ENCODE measurements at regions of chr14 and their contacts with region 1.

Region 1: GRCh38 chr14:70897464-70897863 is 9.8 kb upstream of the PCNX1 start:
- DNase-seq: no peak
- ATAC-seq: peak in 3 of 8 donors; percentile 10 to 39 (median 35)
- H3K4me3 ChIP-seq: no peak overlapping the region
- H3K27ac ChIP-seq: no peak overlapping the region
- H3K4me1 ChIP-seq: peaks cover 0 to 27% (median 5%) of the 10 kb centered on the region in 9 donors
- H3K27me3 ChIP-seq: no peaks in the 10 kb centered on the region
- CTCF ChIP-seq: no peak

Region 2: GRCh38 chr14:70527501-70528105 is 369.9 kb before region 1 on chr14:
- intact Hi-C with region 1: no loop called
- DNase-seq: no peak
- ATAC-seq: no peak
- H3K4me3 ChIP-seq: no peak overlapping the region
- H3K27ac ChIP-seq: no peak overlapping the region
- H3K4me1 ChIP-seq: no peaks in the 10 kb centered on the region
- H3K27me3 ChIP-seq: no peaks in the 10 kb centered on the region
- CTCF ChIP-seq: no peak

Region 3: DNA sequence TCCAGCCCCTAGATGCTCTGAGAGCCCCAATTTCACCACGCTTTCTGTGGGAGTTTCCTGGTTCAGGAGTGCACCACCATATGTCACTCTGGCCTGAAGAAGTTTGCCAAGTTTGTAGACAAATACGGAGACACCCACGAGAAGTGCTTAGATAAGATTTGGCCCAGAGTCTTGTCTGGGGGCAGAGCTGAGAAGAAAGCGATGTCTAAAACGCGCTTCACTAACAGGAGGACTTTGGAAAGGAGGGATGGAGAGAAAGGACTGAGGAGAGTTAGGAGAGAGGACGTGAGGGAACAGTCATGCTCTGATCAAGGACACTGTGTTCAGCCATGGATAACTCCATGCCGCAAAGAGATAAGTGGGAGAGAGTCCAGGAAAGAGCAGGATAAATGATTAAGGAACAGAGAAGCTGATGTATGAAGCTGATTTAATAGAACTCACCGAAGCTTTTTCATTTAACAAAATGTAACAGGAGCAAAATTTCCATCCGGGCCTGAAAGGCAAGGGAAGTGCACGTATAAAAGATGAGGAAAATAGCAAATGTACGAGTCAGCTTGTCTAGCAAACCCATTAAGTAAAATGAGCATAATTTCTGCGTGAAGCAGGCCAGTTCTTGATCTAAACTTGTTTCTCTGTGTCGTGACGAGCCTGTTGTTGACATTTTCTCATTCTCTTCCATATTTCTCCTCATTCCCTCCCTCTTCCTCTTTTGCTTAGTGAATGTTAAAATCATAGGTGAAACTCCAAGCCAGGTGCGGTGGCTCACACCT is 64.7 kb before region 1 on chr14:
- intact Hi-C with region 1: loop called in 3 of 10 experiments (anchors 5 to 10 kb)
- DNase-seq: no peak
- ATAC-seq: peak; percentile 26 to 93 (median 75)
- H3K4me3 ChIP-seq: peak overlapping the region in 1 of 10 donors; percentile 6
- H3K27ac ChIP-seq: peak overlapping the region in 5 of 10 donors; percentile 14 to 54 (median 24)
- H3K4me1 ChIP-seq: peaks cover 0 to 22% (median 12%) of the 10 kb centered on the region in 9 donors
- H3K27me3 ChIP-seq: no peaks in the 10 kb centered on the region
- CTCF ChIP-seq: no peak

Region 4: GRCh38 chr14:70981000-70981952 is 83.8 kb after region 1 on chr14:
- intact Hi-C with region 1: no loop called
- DNase-seq: no peak
- ATAC-seq: peak in 6 of 8 donors; percentile 43 to 77 (median 60)
- H3K4me3 ChIP-seq: peak overlapping the region in 1 of 10 donors; percentile 13
- H3K27ac ChIP-seq: peak overlapping the region in 4 of 10 donors; percentile 21 to 74 (median 38)
- H3K4me1 ChIP-seq: peaks cover 0 to 51% (median 26%) of the 10 kb centered on the region in 9 donors
- H3K27me3 ChIP-seq: no peaks in the 10 kb centered on the region
- CTCF ChIP-seq: no peak

Measured in heart right ventricle (tissue), 16 donors.